ENCODE measurements at regions of chr2 and their contacts with region 1.

Region 1: DNA sequence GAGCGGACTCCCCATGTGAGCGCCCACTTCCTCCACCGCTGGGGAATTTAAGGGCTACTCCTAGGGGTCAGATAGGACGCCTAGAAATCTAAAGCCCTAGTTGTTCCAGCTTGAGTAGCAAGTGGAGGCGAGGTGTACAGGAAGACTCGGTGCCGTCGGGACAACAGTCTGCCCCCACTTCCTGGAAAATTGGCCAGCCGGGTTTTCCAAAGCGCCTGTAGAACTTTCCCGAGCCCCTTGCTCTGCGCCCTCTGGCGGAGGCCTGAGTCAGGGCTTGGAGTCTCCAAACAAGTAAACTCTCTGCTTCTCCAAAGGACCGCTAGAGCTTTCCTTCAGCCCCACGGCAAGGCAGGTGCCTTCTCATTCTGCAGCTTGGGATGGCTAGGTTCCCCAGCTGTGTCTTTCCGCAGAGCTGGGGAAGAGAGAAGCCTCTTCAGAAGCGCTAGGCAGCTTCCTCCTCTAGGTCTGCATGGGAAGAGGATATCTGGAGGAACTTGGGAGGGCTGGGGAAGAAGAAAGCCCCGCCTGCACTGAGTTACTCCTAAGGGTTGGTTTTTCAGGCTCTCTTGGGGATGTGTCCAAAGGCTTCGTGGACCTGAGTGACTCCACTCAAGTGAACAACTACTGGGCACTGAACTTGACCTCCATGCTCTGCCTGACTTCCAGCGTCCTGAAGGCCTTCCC is 688 bp downstream of the SPR start:
- DNase-seq: peak; percentile 86
- H3K4me3 ChIP-seq: peak overlapping the region; percentile 70 to 95
- H3K27ac ChIP-seq: peak overlapping the region; percentile 71 to 74
- H3K4me1 ChIP-seq: peaks cover 6 to 12% of the 10 kb centered on the region in 2 experiments; a peak in 2 of 4 replicates
- H3K27me3 ChIP-seq: no peaks in the 10 kb centered on the region
- CTCF ChIP-seq: peak; percentile 92
- EP300 ChIP-seq: peak in 1 of 2 experiments; percentile 31; a peak in 1 of 4 replicates
- RAD21 ChIP-seq: peak; percentile 47; the same call in 1 of the 2 replicates

Region 2: DNA sequence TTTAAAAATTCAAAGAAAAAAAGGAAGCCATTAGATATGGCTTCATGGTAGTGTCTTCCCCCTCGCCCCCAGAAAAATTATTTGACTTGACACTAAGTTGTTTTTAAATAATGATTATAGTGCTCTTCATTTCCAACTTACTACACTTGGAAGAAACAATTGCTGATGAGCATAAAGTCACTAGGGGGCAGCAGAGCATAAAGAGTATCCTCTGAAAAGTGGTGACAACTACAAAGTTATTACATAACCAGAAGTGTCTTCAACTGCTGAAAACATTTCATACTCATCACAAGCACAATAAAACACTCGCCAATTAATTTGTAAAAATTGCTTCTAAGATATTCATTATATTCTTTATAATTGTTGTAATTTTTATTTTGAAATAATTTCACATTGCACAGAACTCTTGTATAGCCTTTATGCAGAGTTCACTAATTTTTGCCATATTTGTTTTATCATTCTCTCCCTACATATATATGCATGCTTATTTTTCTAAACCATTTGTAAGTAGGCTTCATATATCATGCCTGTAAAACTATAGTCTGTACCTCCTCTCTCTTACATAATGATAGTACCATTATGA is 116.9 kb before region 1 on chr2:
- CTCF ChIA-PET with region 1: interaction called, 20 read pairs
- POLR2A ChIA-PET with region 1: no interaction called
- DNase-seq: peak; percentile 56
- H3K4me3 ChIP-seq: no peak overlapping the region
- H3K27ac ChIP-seq: no peak overlapping the region
- H3K4me1 ChIP-seq: no peaks in the 10 kb centered on the region
- H3K27me3 ChIP-seq: no peaks in the 10 kb centered on the region
- CTCF ChIP-seq: peak; percentile 92
- EP300 ChIP-seq: no peak
- RAD21 ChIP-seq: peak; percentile 95

Region 3: DNA sequence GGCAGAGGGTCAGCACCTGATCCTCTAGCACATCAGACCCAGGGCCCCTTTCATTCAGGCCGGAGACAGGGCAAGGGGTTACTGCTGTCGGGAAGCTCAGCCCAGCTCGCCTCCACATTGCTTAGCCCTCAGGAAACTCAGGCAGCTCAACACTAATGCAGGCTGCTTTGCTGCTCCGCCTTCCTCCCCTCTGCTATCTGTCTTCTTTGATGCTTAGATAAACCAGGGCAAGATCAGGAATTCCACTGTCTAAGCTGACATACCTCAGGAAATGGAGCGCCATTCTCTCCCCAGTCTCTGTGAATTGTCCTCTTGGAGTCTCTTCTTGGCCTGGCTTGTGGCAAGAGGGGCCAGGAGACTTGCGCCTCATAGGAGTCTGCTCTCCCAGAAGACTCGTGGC is 36.6 kb before region 1 on chr2:
- CTCF ChIA-PET with region 1: no interaction called
- POLR2A ChIA-PET with region 1: no interaction called
- DNase-seq: no peak
- H3K4me3 ChIP-seq: no peak overlapping the region
- H3K27ac ChIP-seq: no peak overlapping the region
- H3K4me1 ChIP-seq: no peaks in the 10 kb centered on the region
- H3K27me3 ChIP-seq: peaks cover 15% of the 10 kb centered on the region; the same call in 1 of the 2 replicates
- CTCF ChIP-seq: no peak
- EP300 ChIP-seq: no peak
- RAD21 ChIP-seq: no peak

Region 4: DNA sequence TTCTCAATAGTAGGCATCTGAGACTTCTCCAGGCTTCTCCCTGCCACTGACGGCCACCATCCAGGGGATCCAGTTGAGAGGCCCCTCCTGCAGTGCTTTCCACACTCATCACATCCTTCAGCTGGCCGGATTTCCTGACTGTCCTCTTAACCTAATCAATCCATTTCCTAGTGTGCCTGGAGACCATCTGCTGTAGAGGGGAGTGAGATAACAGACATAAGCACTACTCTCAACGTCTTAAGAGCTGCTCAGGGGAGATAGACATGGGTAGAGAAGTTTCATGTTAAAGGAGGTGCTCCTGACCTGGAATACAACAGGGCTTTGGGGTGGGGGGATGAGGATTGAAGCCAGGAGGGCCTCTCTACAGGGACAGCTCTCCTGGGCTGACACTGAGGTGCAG is 13.5 kb after region 1 on chr2:
- CTCF ChIA-PET with region 1: interaction called, 27 read pairs
- POLR2A ChIA-PET with region 1: no interaction called
- DNase-seq: peak; percentile 38
- H3K4me3 ChIP-seq: no peak overlapping the region
- H3K27ac ChIP-seq: no peak overlapping the region
- H3K4me1 ChIP-seq: peaks cover 0 to 11% of the 10 kb centered on the region in 2 experiments; a peak in 1 of 4 replicates
- H3K27me3 ChIP-seq: peaks cover 43% of the 10 kb centered on the region
- CTCF ChIP-seq: no peak
- EP300 ChIP-seq: no peak
- RAD21 ChIP-seq: no peak

Region 5: GRCh38 chr2:72934683-72935610 is 47.1 kb after region 1 on chr2:
- CTCF ChIA-PET with region 1: interaction called, 53 read pairs
- POLR2A ChIA-PET with region 1: no interaction called
- DNase-seq: no peak
- H3K4me3 ChIP-seq: no peak overlapping the region
- H3K27ac ChIP-seq: no peak overlapping the region
- H3K4me1 ChIP-seq: peaks cover 8 to 15% of the 10 kb centered on the region in 2 experiments; a peak in 1 of 4 replicates
- H3K27me3 ChIP-seq: no peaks in the 10 kb centered on the region
- CTCF ChIP-seq: peak; percentile 38; the same call in 1 of the 2 replicates
- EP300 ChIP-seq: no peak
- RAD21 ChIP-seq: peak; percentile 38; the same call in 1 of the 2 replicates

Region 6: GRCh38 chr2:72963423-72964145 is 75.7 kb after region 1 on chr2:
- CTCF ChIA-PET with region 1: interaction called, 18 read pairs
- POLR2A ChIA-PET with region 1: no interaction called
- DNase-seq: peak; percentile 82
- H3K4me3 ChIP-seq: no peak overlapping the region
- H3K27ac ChIP-seq: no peak overlapping the region
- H3K4me1 ChIP-seq: peaks cover 0 to 7% of the 10 kb centered on the region in 2 experiments; a peak in 1 of 4 replicates
- H3K27me3 ChIP-seq: no peaks in the 10 kb centered on the region
- CTCF ChIP-seq: no peak
- EP300 ChIP-seq: no peak
- RAD21 ChIP-seq: no peak

Region 7: GRCh38 chr2:73085691-73086360 is 197.9 kb after region 1 on chr2:
- CTCF ChIA-PET with region 1: interaction called, 34 read pairs
- POLR2A ChIA-PET with region 1: no interaction called
- DNase-seq: peak; percentile 88
- H3K4me3 ChIP-seq: peak overlapping the region in 1 of 2 experiments; percentile 46; a peak in 1 of 4 replicates
- H3K27ac ChIP-seq: no peak overlapping the region
- H3K4me1 ChIP-seq: peaks cover 2 to 22% of the 10 kb centered on the region in 2 experiments; a peak in 2 of 4 replicates
- H3K27me3 ChIP-seq: no peaks in the 10 kb centered on the region
- CTCF ChIP-seq: peak; percentile 97
- EP300 ChIP-seq: no peak
- RAD21 ChIP-seq: peak; percentile 96

Region 8: GRCh38 chr2:73212448-73213176 is 324.7 kb after region 1 on chr2:
- CTCF ChIA-PET with region 1: interaction called, 16 read pairs
- POLR2A ChIA-PET with region 1: no interaction called
- DNase-seq: peak; percentile 89
- H3K4me3 ChIP-seq: no peak overlapping the region; a peak in 1 of 4 replicates
- H3K27ac ChIP-seq: peak overlapping the region in 1 of 2 experiments; percentile 47; a peak in 1 of 4 replicates
- H3K4me1 ChIP-seq: peaks cover 3 to 10% of the 10 kb centered on the region in 2 experiments; a peak in 2 of 4 replicates
- H3K27me3 ChIP-seq: no peaks in the 10 kb centered on the region; the same call in 1 of the 2 replicates
- CTCF ChIP-seq: peak; percentile 91
- EP300 ChIP-seq: no peak
- RAD21 ChIP-seq: peak; percentile 69